PC-3 (cell line): ENCODE measurements at regions of chr14 and their contacts with region 1.

Region 1: DNA sequence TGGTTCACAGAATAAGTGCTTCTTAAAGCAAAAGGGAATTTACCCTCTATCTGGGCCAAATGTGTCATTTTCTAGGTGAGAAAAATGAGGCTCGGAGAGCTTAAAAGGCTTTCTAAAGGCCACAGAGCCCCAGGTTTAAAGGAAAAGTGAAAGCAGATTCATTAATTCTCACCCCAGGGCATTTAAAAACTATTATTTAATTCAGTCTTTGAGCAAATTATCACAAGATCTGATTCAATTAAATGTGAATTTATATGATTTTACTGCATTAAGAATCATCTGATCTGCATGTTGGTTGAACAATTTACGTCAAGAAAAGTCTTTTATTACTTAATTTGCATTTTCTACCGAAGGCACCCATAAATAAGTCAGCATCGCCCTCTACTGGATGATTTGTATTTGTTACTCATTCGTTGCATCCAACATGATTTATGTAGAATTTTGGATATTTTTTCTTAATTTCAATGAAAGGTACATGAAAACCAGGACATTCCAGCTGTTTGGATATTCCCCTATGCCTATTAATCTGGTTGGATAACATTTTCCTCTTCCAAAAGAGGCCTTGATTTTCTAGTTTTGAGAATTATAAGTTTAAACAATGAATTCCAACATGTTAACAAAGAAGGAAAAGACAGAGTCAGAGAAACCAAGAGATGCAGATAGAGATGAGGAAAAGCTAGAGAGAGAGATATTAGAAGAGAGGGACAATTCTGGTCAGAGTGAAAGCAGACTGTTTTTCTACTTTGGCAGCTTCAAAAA is 19.1 kb upstream of the DHRS7 start:
- DNase-seq: peak; percentile 98
- ATAC-seq: peak; percentile 13; the same call in 1 of the 2 replicates
- H3K4me3 ChIP-seq: peak overlapping the region; percentile 50
- H3K27ac ChIP-seq: no peak overlapping the region
- H3K4me1 ChIP-seq: peaks cover 29% of the 10 kb centered on the region
- H3K27me3 ChIP-seq: no peaks in the 10 kb centered on the region
- CTCF ChIP-seq: peak; percentile 100

Region 2: DNA sequence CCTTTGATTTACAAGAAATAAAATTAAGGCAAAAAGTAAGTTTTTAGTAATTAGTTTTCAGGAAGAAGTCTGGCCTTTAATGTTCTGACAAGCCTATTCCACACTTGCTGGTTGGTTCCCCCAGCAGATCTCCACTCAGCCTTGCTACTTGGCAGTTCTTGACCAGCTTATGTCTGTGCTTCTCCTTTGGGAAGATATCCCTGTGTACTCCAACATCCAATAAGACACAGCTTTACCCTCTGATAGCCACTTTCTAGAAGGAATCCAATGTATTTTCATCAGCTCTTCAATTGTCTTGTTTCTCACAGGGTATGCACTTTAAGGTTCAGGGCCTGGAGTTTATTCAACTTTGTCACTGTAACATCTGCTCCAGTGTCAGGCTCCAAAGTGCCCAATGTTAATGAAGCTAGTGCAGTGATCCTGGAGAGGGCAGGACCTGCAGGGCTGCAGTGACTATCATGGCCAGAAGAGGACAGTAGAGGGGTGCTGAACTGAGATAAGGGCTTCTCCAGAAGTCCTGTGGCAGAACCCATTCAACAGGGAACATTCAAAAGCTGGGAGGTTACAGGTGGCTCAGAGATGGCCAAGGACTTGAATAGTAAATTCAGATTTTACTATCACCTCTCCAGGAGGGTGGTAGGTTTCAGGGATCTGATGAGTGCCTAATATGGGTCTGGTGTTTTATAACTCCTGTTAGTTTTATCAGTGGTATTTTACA is 677.1 kb before region 1 on chr14:
- CTCF ChIA-PET with region 1: interaction called, 3 read pairs
- POLR2A ChIA-PET with region 1: interaction called, 3 read pairs
- intact Hi-C with region 1: loop called (anchors 1 kb)
- DNase-seq: peak; percentile 95
- ATAC-seq: peak; percentile 90
- H3K4me3 ChIP-seq: no peak overlapping the region
- H3K27ac ChIP-seq: no peak overlapping the region
- H3K4me1 ChIP-seq: peaks cover 7% of the 10 kb centered on the region
- H3K27me3 ChIP-seq: no peaks in the 10 kb centered on the region; the same call in 1 of the 2 replicates
- CTCF ChIP-seq: peak; percentile 100

Region 3: DNA sequence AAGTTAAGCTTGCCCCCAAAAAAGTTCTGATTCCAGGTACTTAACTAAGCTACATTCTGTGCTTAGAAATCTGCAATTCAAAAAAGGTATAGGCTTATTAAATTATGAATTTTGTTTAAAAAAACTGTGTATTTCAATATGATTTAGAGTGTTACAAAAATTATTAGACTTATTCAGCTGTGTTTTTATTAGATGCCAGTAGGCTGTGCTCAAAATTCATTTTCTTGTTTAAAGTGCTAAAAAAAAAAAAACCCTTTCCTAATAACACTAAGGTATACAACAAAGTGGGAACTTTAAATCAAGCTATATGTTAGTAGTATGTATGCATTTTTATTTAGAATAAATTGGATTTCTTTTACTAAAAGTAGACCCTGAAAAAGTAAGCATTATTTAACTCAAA is 239.4 kb before region 1 on chr14:
- CTCF ChIA-PET with region 1: interaction called, 7 read pairs
- POLR2A ChIA-PET with region 1: no interaction called
- intact Hi-C with region 1: loop called (anchors 2 kb)
- DNase-seq: no peak
- ATAC-seq: no peak; the same call in 1 of the 2 replicates
- H3K4me3 ChIP-seq: no peak overlapping the region
- H3K27ac ChIP-seq: no peak overlapping the region
- H3K4me1 ChIP-seq: no peaks in the 10 kb centered on the region
- H3K27me3 ChIP-seq: peaks cover 17% of the 10 kb centered on the region
- CTCF ChIP-seq: peak; percentile 52

Region 4: DNA sequence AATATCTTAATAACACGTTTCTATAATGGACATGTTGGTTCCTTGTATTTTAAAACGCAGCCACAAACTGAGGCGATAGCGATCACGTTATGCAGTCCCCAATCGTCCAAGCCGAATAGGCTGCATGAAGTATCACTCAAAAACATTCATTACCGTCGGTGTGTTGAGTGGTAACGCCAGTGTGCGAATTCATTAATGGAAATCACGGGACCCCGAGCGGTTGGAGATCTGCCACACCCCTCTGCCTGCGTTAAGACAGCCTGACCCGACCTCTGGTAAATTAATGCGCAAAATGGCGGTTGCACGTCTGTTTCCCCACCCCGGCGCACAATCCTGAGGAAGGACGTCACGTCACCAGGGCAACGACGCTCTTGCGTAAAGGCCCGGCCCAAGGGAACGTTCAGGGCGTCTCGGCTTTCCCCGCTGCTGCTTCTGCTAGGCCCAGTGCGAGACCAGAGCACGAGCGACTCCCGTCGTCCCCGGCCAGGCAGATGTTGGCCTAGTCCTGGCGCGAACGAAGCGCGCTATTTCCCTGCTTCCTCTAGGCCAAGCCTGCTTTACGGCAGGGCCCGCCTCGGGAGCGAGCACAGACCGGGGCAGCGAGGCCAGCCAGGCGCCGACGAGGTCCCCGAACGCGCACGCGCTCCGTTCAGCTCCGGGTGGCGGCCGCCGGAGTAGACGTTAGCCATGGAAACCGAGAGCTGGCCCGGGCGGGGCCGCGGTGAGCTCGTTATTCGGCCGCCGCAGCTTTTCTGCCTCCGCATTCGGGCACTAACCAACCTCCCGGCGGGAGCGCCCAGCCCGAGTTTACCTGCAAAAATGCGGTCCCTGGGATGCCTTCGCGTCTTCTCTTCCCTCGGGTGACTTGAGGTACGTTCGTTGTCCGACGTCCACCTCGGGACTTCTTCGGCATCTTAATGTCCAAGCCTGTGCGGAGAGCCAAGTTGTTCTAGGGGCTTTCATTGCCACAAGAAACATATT is 92.5 kb before region 1 on chr14 and contains the start of gene PCNX4:
- CTCF ChIA-PET with region 1: interaction called, 6 read pairs
- POLR2A ChIA-PET with region 1: interaction called, 3 read pairs
- intact Hi-C with region 1: loop called (anchors 1 kb)
- DNase-seq: peak; percentile 100
- ATAC-seq: peak; percentile 93
- H3K4me3 ChIP-seq: peak within 1 kb of the TSS; percentile 76
- H3K27ac ChIP-seq: peak within 1 kb of the TSS; percentile 85
- H3K4me1 ChIP-seq: peaks cover 42% of the 10 kb centered on the region
- H3K27me3 ChIP-seq: no peaks in the 10 kb centered on the region
- CTCF ChIP-seq: no peak
- total RNA-seq, gene PCNX4: 117 and 151 TPM in 2 replicates

Region 5: DNA sequence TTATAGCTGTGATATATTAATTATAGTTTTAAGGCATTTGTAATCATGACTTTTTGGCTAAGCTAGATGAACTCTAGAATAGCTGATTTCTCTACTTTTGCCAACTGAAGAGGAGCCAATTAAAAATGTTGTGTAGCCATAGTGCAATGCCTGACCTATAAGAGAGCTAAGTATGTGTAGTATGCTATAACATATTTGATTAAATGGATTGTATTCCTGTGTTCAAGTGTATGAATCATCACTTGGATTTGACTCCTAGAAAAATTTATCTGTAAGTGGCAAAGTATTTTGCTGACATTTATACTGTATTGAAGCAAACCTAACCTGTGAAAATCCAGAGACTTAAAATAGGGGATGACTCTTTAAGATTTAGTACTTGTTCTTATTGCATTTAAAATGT is 58.4 kb before region 1 on chr14:
- CTCF ChIA-PET with region 1: no interaction called
- POLR2A ChIA-PET with region 1: no interaction called
- intact Hi-C with region 1: no loop called
- DNase-seq: no peak
- ATAC-seq: 0 out of 2 replicates have a peak, but pooled peaks have one; percentile 38
- H3K4me3 ChIP-seq: no peak overlapping the region
- H3K27ac ChIP-seq: no peak overlapping the region
- H3K4me1 ChIP-seq: no peaks in the 10 kb centered on the region
- H3K27me3 ChIP-seq: no peaks in the 10 kb centered on the region
- CTCF ChIP-seq: no peak

Region 6: DNA sequence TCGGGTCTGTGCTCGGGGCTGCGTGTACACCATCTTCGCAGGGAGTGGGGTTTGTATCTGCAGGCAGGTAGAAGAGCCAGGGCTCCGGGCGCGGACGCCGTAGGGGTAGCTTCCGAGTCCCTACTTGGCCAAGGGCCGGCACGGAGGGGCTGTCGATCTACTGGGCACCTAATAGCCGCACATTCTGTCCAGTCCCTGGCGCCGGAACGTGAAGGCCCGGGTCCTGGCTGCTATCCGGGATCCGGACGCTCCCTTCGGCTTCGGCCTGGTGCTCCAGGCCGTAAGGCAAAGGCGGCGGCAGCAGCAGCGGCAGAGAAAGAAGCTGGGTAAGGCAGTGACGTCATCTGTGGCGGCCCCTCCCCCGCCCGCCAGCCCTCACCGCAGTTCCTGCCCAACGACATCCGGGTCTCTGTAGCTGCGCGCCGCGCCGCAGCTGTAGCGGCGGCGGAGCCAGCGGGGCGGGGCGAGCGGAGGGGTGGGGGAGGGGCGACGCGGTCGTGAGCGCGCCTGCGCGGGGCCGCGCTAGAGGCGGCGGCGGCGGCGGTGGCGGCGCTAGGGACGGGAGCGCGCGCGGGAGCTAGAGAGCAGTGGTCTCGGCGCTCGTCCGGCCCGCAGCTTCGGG is 64.5 kb after region 1 on chr14 and contains the start of gene PPM1A:
- CTCF ChIA-PET with region 1: interaction called, 3 read pairs
- POLR2A ChIA-PET with region 1: interaction called, 6 read pairs
- intact Hi-C with region 1: loop called (anchors 2 kb)
- DNase-seq: peak; percentile 100
- ATAC-seq: peak; percentile 70
- H3K4me3 ChIP-seq: peak within 1 kb of the TSS; percentile 69
- H3K27ac ChIP-seq: peak within 1 kb of the TSS; percentile 87
- H3K4me1 ChIP-seq: peaks cover 30% of the 10 kb centered on the region
- H3K27me3 ChIP-seq: no peaks in the 10 kb centered on the region
- CTCF ChIP-seq: no peak
- total RNA-seq, gene PPM1A: 69.3 and 69.4 TPM in 2 replicates

Region 7: DNA sequence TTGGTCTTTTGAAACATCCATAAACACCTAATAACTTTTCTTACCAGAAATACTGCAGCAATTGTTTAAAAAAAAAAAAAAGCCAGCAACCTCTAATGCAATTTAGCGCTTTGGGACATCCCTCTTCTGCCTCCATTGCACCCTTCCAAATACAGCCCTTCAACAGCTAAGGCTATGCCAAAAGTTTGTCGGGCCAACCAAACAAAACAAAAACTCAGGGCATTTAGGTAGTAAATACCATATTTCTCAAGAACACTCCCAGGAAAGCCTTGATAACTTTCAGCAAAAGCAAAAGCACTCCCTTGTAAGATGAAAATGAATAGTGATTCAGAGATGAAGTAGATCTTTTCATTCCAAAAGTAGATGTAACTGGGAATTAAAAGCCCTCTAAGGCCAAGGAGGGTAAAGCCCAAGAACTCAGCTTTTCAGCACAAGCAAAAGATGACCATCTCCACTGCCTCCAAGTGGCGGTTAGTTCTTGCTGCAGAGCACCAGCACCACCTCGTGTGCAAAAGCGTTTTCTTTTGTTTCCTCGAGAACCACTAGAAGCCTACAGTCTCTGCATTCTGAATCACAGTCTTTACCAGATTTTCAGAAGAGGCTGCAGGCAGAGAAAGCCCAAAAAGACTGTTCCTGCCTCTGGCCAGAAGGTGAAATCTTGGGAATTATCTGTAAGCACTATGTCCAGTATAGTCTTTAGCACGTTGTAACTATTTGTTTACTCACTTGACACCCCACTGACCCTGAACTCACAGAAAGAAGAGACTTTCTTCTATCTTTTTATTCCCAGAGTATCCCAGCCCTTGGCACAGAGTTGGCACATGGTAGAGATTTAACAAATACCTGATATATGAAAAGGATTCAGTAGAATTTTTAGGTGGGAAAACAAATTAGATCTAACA is 377.8 kb after region 1 on chr14:
- CTCF ChIA-PET with region 1: no interaction called
- POLR2A ChIA-PET with region 1: no interaction called
- intact Hi-C with region 1: loop called (anchors 1 kb)
- DNase-seq: peak; percentile 94
- ATAC-seq: peak; percentile 97
- H3K4me3 ChIP-seq: no peak overlapping the region
- H3K27ac ChIP-seq: no peak overlapping the region
- H3K4me1 ChIP-seq: peaks cover 4% of the 10 kb centered on the region; the same call in 1 of the 2 replicates
- H3K27me3 ChIP-seq: no peaks in the 10 kb centered on the region
- CTCF ChIP-seq: peak; percentile 98